GM12878 (cell line): ENCODE measurements at regions of chr20 and their contacts with region 1.

Region 1: GRCh38 chr20:33933469-33933909 is 60.2 kb upstream of the RALY start:
- DNase-seq: no peak
- ATAC-seq: peak; percentile 87
- H3K4me3 ChIP-seq: no peak overlapping the region
- H3K27ac ChIP-seq: no peak overlapping the region
- H3K4me1 ChIP-seq: no peaks in the 10 kb centered on the region
- H3K27me3 ChIP-seq: no peaks in the 10 kb centered on the region
- CTCF ChIP-seq: peak; percentile 50 to 61 (median 58); a peak in 5 of 6 replicates
- EP300 ChIP-seq: no peak
- POLR2A ChIP-seq: no peak
- RAD21 ChIP-seq: peak; percentile 87

Region 2: DNA sequence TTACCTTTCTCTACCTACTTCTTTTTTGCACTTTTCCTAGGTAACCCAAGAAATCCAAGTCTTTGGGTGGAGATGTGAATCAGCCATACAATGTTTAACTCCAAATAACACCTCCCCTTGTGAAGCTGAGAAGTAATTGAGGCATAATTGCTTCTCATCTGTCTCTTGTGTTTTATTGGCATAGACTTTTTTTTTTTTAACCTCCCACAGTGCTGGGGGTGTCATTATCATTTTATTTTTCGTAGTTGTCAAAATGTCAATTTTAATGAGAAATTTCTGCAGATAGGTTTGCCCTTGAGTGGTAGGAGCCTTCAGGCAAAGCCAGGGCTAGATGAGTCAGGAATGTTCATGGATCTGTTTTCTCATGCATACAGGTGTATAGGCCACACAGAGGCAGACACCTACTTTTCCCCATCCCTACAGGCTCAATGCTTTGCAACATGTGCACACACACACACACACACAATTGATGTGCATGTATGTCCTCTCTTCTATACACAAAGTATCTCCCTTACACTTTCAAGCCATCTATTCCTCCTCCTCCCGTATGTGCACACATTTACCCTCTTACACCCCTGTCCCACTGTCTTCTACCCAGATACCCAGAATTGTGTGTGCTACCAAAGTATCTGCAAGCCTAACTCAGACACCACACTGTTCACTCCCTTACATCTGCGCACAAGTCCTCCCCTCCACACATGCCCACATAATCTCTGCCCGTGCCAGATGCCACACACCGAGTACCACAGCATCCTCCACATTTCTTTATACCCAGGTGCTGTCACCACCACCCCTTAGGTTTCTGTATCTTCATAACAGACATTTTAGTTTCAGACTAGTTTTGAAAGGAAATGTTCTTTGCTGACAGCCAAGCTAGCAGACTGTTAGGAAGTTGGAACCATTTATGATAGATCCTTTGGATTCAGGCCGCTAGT is 82.2 kb after region 1 on chr20:
- CTCF ChIA-PET with region 1: no interaction called
- POLR2A ChIA-PET with region 1: no interaction called
- RAD21 ChIA-PET with region 1: no interaction called
- SMC1A ChIA-PET with region 1: no interaction called
- in situ Hi-C with region 1: no loop called
- intact Hi-C with region 1: no loop called
- DNase-seq: no peak
- ATAC-seq: no peak
- H3K4me3 ChIP-seq: no peak overlapping the region
- H3K27ac ChIP-seq: no peak overlapping the region
- H3K4me1 ChIP-seq: peaks cover 27% of the 10 kb centered on the region
- H3K27me3 ChIP-seq: no peaks in the 10 kb centered on the region
- CTCF ChIP-seq: no peak
- EP300 ChIP-seq: no peak
- POLR2A ChIP-seq: no peak
- RAD21 ChIP-seq: no peak

Region 3: GRCh38 chr20:34069341-34070078 is 136.0 kb after region 1 on chr20:
- CTCF ChIA-PET with region 1: interaction called, 24 read pairs
- POLR2A ChIA-PET with region 1: no interaction called
- RAD21 ChIA-PET with region 1: interaction called, 3 read pairs
- SMC1A ChIA-PET with region 1: interaction called, 3 read pairs
- in situ Hi-C with region 1: no loop called
- intact Hi-C with region 1: loop called (anchors 5 kb)
- DNase-seq: peak; percentile 30
- ATAC-seq: peak; percentile 97
- H3K4me3 ChIP-seq: no peak overlapping the region
- H3K27ac ChIP-seq: no peak overlapping the region
- H3K4me1 ChIP-seq: no peaks in the 10 kb centered on the region
- H3K27me3 ChIP-seq: no peaks in the 10 kb centered on the region
- CTCF ChIP-seq: peak; percentile 76 to 86 (median 78)
- EP300 ChIP-seq: no peak
- POLR2A ChIP-seq: no peak
- RAD21 ChIP-seq: peak; percentile 91